Common myeloid progenitor, CD34-positive (primary cell): ENCODE measurements at regions of chr16 and their contacts with region 1.

Region 1: DNA sequence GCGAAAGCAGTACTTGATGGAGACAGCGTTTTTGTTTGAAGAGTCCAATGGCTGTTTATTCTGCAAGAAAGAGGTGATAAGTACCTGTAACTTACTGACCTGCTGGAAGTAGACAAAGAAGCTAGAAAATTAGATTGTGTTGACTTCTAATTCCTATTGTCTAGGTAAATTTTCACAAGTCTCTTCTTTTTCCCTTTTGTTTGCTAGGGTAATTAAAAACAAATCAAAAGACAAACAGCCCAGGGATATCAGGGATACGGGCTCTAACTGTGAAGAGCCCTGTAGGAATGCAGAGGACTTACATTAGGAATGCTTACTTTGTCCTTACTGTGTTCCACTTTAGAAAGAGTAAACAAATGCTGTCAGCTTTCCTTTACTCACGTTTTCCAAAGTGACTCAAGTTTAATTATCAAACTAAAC is 7.0 kb downstream of the PSME3IP1 start:
- DNase-seq: no peak
- H3K4me3 ChIP-seq: no peak overlapping the region
- H3K27ac ChIP-seq: no peak overlapping the region
- H3K4me1 ChIP-seq: no peaks in the 10 kb centered on the region
- H3K27me3 ChIP-seq: no peaks in the 10 kb centered on the region

Region 2: DNA sequence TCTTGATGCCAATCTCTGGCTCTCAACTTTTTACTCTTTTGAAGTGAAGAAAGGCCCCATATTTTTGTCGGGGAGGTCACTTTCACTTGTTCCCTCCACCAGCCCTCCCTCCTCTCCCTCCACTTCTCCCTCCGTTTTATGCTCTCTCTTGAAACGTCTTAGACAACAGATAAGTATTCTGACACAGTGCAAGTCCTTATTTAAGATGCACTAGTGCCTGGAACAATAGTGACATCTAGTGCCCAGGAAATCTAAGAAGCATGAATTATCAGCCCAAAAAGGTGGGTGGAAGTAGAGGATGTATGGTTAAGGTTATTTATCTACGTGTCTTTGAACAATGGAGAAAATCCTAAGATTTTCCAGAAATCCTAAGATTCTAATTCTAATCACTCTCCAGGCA is 10.8 kb before region 1 on chr16:
- CTCF ChIA-PET with region 1: interaction called, 18 read pairs
- POLR2A ChIA-PET with region 1: no interaction called
- DNase-seq: peak; percentile 83 to 91 (median 90)
- H3K4me3 ChIP-seq: no peak overlapping the region
- H3K27ac ChIP-seq: no peak overlapping the region
- H3K4me1 ChIP-seq: peaks cover 0 to 8% (median 0%) of the 10 kb centered on the region in 4 experiments
- H3K27me3 ChIP-seq: no peaks in the 10 kb centered on the region

Region 3: DNA sequence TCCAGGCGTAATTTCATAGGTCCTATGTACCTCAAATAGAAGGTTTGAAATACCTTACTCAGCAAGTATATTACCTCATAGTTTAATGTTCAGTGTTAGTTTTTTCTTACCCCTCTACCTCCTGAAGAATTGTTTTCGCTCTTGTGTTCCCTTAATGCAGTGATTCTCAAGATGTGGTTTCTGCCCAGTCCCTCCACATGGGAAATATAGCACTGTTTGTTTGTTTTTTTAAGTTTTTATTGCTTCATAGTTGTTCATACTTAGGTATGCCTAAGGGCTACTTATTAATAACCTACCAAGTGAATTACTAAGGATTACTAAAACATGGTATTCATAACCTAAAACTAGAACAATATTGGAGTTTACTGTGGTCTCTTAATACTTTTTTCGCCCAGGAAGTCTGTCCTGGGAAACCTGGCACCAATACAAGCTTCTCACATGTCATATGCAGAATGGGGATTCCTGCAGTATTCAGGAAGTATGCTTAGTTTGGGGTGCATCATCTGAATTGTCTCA is 12.3 kb after region 1 on chr16:
- CTCF ChIA-PET with region 1: no interaction called
- POLR2A ChIA-PET with region 1: no interaction called
- DNase-seq: no peak
- H3K4me3 ChIP-seq: no peak overlapping the region
- H3K27ac ChIP-seq: no peak overlapping the region
- H3K4me1 ChIP-seq: peaks cover 6 to 27% (median 14%) of the 10 kb centered on the region in 4 experiments
- H3K27me3 ChIP-seq: no peaks in the 10 kb centered on the region

Region 4: DNA sequence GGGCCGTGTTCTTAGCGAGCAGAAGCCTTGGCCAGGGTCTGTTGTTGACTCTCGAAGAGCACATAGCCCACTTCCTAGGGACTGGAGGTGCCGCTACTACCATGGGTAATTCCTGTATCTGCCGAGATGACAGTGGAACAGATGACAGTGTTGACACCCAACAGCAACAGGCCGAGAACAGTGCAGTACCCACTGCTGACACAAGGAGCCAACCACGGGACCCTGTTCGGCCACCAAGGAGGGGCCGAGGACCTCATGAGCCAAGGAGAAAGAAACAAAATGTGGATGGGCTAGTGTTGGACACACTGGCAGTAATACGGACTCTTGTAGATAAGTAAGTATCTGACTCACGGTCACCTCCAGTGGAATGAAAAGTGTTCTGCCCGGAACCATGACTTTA is 25.9 kb after region 1 on chr16:
- CTCF ChIA-PET with region 1: no interaction called
- POLR2A ChIA-PET with region 1: no interaction called
- DNase-seq: peak in 1 of 3 donors; percentile 5
- H3K4me3 ChIP-seq: no peak overlapping the region
- H3K27ac ChIP-seq: no peak overlapping the region
- H3K4me1 ChIP-seq: no peaks in the 10 kb centered on the region
- H3K27me3 ChIP-seq: no peaks in the 10 kb centered on the region